Right ventricle myocardium superior (tissue), 1 donor: ENCODE measurements at regions of chr1 and their contacts with region 1.

Region 1: DNA sequence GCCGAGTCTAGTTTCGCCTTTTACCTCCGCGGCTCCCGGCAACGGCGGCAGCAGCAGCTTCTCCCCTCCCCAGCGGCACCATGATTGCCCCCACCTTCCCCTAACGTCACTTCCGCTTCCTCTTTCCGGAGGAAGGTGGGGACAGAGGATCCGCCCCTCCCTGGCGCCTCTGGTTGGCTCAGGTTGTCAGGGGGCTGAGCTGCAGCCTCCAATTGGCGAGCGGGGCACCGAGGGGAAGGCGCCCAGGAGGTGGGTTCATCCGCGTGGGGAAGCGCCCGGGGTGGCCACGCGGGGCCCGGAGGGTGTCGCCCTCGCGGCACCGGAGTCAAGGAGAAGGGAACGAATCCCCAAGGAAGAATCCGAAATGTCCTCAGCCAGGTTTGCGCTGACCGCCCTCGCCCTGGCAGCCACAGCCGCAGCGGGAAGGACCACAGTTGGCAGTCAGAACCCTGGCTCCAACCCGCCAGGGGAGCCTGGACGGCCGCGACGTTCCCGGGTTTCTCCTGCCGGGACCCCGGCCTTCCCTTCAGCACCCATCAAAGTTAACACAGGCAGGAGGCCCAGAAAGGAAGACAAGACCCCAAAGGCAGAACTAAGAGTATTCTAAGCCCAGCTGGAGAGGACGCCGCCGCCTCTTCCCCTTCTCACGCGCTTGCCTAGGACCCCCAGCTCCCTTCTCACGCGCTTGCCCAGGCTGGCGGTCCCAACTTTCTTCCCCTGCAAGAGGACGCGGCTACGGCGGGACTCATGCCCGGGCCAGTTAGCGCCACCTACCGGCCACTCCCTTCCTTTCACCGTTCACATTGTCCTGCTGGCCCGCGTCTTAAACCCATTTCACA is at the start of gene MTF1:
- DNase-seq: peak; percentile 98
- ATAC-seq: peak; percentile 99
- total RNA-seq, gene MTF1: 12.5 TPM

Region 2: GRCh38 chr1:37680933-37681332 is 178.8 kb before region 1 on chr1:
- intact Hi-C with region 1: no loop called
- DNase-seq: no peak
- ATAC-seq: no peak

Region 3: DNA sequence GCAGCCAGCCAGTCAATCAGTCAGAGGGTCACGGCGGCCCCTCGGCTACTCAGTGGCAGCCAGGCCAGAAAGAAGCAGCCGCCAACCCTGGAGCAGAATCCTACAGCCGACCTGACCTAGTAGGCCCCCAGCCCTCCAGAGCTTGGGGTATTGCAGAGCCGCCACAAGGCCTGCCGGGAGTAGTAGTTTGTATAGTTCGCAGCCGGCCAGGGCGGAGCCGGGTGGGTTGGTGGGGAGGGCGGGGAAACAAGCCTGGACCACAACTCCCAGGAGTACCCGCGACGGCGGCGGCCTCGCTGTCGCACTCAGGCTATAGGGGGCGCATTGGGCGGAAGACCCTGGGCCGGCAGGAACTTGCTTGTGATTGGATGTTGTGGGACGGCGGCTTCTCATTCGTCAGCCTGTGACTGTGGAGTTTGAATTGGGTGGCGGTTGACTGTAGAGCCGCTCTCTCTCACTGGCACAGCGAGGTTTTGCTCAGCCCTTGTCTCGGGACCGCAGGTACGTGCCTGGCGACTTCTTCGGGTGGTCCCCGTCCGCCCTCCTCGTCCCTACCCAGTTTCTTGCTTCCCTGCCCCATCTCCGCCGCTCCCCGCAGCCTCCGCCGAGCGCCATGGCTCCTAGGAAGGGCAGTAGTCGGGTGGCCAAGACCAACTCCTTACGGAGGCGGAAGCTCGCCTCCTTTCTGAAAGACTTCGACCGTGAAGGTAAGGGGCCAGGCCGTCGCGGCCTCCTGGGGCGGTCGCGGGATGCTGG is 167.5 kb before region 1 on chr1 and contains the start of gene CDCA8:
- intact Hi-C with region 1: loop called (anchors 10 kb)
- DNase-seq: peak; percentile 98
- ATAC-seq: peak; percentile 96
- total RNA-seq, gene CDCA8: 0.46 TPM

Region 4: DNA sequence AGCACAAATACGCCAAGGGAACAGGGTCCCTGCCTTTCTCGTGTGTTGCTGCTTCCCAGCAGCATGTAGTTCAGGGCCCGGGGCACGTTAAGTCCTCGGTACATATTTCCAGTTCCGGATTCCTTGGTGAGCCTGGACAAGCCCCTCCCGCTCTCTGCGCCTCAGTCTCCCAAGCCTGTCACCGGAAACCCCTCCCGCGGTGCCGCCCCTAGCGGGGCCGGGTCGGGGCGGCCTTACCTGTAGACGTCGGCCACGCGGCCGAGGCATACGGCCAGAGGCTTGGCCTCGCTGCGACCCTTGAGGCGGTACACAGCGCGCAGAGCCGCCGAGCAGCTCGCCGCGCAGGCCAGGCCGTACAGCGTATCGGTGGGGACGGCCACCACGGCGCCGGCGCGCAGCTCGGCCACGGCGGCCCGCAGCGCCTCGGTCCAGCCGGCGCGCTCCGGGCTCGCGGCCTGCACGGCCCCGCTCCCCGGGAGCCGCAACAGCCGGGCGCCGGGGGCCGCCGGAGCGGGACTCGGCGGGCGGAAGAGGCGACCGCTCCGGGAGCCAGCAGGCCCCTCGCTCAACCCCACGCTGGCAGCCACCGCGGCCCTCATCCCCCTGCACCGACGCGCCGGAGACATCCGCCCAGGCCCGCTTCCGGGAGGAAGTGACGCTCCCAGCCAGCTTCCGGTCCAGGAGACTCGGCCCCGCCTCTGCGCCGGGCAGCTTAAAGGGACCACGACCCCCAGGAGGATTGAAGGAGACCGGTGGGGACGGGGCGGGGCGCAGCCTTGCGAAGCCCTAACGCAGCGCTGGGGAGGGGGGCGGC is 52.0 kb before region 1 on chr1 and contains the starts of genes C1orf122 and YRDC:
- intact Hi-C with region 1: loop called (anchors 2 kb)
- DNase-seq: peak; percentile 97
- ATAC-seq: peak; percentile 97
- total RNA-seq, gene C1orf122: 52.2 TPM
- total RNA-seq, gene YRDC: 4.5 TPM

Region 5: DNA sequence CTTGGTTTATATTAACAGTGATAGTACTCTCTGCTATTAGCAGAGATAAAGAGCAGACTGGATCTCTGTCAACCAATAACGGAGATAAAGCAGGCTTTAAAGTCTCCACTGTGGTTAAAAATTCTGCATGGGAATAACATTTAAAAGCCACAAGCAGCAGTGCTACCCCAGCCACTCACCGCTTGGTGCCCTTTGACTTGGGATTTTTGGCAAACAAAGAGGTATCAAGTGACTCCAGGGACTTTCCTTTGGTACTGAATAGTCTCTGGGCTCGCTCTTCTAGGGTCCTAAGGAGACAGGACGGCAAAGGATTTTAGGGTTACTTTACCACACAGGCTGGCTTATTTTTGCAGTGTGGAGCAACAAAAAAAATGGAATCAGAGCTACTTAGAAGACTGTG is 118.8 kb after region 1 on chr1:
- intact Hi-C with region 1: no loop called
- DNase-seq: no peak
- ATAC-seq: no peak

Region 6: DNA sequence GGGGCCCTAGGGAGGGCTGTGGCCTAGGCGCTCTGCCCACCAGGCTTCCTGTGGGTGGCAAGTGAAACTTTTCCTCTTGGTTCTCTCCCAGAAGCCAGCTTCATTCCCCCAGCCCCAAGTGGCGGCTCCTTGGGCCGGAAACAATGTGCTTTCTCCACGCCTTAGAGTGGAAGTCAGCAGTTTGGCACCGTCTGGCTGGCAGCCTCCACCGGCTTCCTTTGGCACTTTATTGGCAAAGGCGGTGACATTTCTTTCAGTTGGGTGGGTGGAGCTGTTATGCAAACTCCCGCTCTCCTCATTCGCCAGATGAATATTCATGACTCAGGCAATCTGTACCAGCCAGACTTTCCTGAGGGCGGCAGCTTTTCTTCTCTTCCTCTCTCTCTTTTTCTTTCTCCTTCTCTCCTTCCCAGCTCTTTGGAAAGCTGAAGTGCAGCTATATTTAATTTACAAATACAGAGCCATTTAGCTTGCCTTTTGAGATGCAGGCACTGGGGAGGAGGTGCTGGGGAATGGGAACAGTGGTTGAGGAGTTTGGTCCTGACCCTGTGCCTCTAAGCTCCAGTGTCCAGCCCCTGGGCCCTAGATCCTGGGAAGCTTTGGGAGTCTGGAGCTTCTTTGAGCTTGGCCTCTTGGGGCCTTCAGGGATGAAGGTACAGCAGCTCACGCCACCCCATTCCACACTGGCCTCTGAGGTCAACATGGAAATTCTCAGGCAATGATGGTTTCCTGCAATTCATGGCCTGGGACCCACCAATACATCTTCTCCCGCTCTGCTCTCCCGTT is 254.7 kb after region 1 on chr1:
- intact Hi-C with region 1: no loop called
- DNase-seq: no peak
- ATAC-seq: no peak